ENCODE measurements at regions of chr19 and their contacts with region 1.

Region 1: DNA sequence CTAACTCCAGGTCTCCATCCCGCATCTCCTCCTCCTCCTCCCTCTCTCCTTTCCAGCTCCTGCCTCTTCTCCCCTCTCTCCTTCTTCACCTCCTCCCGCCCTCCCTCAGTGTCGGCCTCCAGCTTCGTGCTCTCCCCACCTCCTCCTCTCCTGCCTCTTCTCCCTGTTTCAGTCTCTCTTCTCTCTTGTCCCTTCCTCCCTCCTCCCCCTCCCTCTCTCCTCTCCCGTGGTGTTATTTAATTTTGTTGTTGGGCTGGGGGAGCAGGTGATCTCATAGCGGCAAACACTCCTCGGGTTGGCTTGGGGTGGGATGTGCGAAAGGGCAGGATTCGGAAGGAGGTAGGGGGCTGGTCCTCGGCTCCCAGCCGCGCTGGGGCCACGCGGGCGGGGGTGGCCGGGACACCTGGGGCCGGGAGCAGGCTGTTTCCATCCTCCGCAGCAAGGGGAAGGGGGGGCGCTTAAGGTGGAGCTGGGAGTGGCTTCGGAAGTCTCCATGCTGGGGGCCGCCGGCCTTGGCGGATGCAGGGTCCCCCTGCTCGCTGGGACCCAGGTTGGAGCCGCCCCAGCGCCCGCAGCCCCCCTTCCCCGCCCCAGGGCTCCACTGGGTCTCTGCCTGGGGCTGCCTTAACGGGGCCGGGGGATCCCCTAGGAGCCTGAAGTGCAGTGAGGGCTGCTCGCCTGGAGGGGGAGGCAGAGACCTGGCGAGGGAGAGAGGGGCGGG is at the start of gene CA11:
- DNase-seq: peak; percentile 73 to 83 (median 83)
- H3K4me3 ChIP-seq: peak within 1 kb of the TSS; percentile 33 to 75 (median 37)
- H3K4me3 Mint-ChIP-seq: peak within 1 kb of the TSS; percentile 76 to 94
- H3K27ac ChIP-seq: no peak within 1 kb of the TSS
- H3K27ac Mint-ChIP-seq: peak within 1 kb of the TSS; percentile 15 to 80 (median 66)
- H3K4me1 ChIP-seq: peaks cover 30 to 44% of the 10 kb centered on the region in 2 donors
- H3K4me1 Mint-ChIP-seq: peaks cover 44% of the 10 kb centered on the region
- H3K27me3 ChIP-seq: peaks cover 0 to 10% of the 10 kb centered on the region in 2 donors
- H3K27me3 Mint-ChIP-seq: peaks cover 11 to 28% (median 25%) of the 10 kb centered on the region in 3 donors
- CTCF ChIP-seq: peak; percentile 88
- polyA plus RNA-seq, gene CA11: 1.1 to 4.9 (median 1.8) TPM

Region 2: DNA sequence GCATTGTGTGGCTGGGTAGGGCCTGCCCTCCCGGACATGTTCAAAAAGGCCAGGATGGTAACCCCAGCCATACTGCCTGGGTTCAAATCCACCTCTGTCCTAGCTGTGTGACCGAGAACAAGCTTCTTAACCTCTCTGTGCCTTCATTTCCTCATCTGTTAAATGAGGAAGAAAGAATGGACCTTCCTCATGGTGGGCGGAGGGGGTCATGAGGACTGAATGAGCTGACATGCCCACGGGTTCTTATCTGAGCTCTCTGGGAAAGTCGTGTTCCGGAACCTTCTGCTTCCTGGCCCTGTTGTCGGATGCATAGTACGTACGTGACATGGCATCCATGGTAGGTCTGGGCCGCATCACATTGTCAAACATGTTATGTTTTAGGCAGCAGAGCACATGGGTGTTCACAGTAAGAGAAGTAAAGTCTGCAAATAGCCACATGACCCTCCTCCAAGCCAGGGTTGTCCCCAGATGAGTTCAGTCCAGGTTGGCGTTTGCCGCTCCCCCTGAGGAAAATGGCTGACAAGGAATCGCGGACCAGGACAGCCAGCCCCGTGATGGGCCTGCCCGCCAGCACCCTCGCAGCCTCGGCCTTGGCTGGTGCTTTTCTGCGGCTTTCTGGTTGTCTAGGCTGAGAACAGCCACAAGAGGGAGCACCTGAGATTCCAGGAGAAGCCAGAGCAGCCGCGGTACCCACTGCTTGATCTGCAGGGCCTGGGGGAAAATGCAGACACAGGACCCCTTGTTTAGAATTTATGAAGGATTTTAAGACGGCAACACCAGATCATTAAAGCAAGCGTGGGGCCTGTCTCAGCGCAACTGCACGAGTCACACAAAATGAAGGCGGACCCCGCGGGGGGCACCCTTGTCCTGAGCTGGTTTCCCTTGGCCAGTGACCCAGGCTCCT is 29.0 kb after region 1 on chr19:
- intact Hi-C with region 1: loop called (anchors 1 to 5 kb)
- DNase-seq: peak; percentile 69 to 76 (median 74)
- H3K4me3 ChIP-seq: no peak overlapping the region
- H3K4me3 Mint-ChIP-seq: peak overlapping the region in 1 of 2 donors; percentile 70
- H3K27ac ChIP-seq: no peak overlapping the region
- H3K27ac Mint-ChIP-seq: peak overlapping the region in 4 of 7 donors; percentile 14 to 72 (median 45)
- H3K4me1 ChIP-seq: peaks cover 0 to 7% of the 10 kb centered on the region in 2 donors
- H3K4me1 Mint-ChIP-seq: peaks cover 8% of the 10 kb centered on the region
- H3K27me3 ChIP-seq: no peaks in the 10 kb centered on the region
- H3K27me3 Mint-ChIP-seq: peaks cover 2 to 4% (median 3%) of the 10 kb centered on the region in 3 donors
- CTCF ChIP-seq: peak; percentile 80

Region 3: GRCh38 chr19:48713864-48714758 is 68.0 kb after region 1 on chr19:
- intact Hi-C with region 1: loop called in 1 of 2 experiments (anchors 10 kb)
- DNase-seq: peak; percentile 97 to 99 (median 98)
- H3K4me3 ChIP-seq: peak overlapping the region; percentile 42 to 86 (median 67)
- H3K4me3 Mint-ChIP-seq: peak overlapping the region; percentile 79 to 80
- H3K27ac ChIP-seq: peak overlapping the region; percentile 46 to 63
- H3K27ac Mint-ChIP-seq: peak overlapping the region; percentile 71 to 93 (median 86)
- H3K4me1 ChIP-seq: peaks cover 19 to 21% of the 10 kb centered on the region in 2 donors
- H3K4me1 Mint-ChIP-seq: peaks cover 14% of the 10 kb centered on the region
- H3K27me3 ChIP-seq: peaks cover 0 to 2% of the 10 kb centered on the region in 2 donors
- H3K27me3 Mint-ChIP-seq: peaks cover 6 to 11% (median 6%) of the 10 kb centered on the region in 3 donors
- CTCF ChIP-seq: no peak

Region 4: DNA sequence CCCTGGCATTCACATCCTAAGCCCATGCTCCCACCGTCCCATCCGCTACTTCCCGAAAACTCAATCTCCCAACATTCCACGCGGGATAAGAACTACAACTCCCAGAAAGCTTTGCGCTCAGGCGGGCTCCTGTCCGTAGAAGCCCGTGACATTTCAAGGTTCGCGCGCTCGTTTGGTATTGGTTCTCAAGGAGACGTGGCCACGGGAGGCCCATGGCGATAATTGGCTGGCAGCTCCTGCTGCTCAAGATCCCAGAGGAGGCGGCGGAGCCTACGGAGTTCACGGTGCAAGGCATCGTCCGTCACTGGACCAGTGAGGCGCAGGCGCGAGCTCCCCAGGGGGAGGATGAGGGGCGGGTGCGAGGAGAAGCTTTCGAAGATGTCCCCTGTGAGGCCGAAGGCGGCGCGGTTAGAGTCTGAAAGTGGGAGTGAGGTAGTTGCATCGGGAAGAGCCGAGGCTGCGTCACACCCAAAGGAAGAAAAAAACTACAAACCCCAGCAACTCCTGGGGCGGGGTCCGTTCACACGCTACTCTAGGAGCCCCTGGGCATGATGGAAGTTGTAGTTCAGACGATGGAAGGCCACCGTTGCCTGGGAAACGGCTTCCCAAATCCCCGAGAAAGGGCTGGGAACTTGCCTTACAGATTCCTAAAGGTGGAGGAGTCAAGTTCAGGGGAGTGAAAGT is 74.6 kb after region 1 on chr19:
- intact Hi-C with region 1: loop called (anchors 5 to 10 kb)
- DNase-seq: peak; percentile 88 to 93 (median 93)
- H3K4me3 ChIP-seq: peak overlapping the region; percentile 34 to 76 (median 72)
- H3K4me3 Mint-ChIP-seq: peak overlapping the region; percentile 93 to 96
- H3K27ac ChIP-seq: peak overlapping the region; percentile 82 to 85
- H3K27ac Mint-ChIP-seq: peak overlapping the region; percentile 93 to 97 (median 96)
- H3K4me1 ChIP-seq: peaks cover 16 to 27% of the 10 kb centered on the region in 2 donors
- H3K4me1 Mint-ChIP-seq: peaks cover 19% of the 10 kb centered on the region
- H3K27me3 ChIP-seq: no peaks in the 10 kb centered on the region
- H3K27me3 Mint-ChIP-seq: peaks cover 0 to 6% (median 0%) of the 10 kb centered on the region in 3 donors
- CTCF ChIP-seq: no peak

Region 5: DNA sequence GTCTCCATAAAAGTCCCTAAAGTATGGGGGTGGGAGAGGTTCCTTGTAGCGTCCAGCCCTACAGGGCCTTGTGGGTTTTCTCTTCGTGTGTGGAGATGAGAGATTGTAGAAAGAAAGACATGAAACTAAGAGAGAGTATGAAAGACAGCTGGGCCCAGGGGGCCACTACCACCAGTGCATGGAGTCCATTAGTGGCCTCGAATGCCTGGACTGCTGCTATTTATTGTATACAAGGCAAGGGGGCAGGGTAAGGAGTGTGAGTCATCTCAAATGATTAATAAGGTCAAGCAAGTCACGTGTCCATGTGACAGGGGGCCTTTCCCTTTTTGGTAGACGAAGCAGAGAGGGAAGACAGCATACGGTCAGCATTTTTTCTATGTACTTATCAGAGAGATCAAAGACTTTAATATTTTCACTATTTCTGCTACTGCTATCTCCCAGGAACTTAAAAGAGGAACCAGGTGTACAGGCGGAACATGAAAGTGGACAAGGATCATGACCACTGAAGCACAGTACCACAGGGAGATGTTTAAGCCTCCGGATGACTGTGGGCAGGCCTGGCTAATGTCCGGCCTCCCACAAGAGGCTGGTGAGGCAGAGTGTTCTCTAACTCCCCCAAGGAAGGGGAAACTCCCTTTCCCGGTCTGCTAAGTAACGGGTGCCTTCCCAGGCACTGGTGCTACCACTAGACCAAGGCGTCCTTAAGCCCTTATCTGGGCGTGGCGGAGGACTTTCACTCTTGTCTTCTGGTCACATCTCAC is 134.7 kb after region 1 on chr19:
- intact Hi-C with region 1: loop called in 1 of 2 experiments (anchors 5 kb)
- DNase-seq: peak; percentile 72 to 91 (median 81)
- H3K4me3 ChIP-seq: no peak overlapping the region
- H3K4me3 Mint-ChIP-seq: peak overlapping the region in 1 of 2 donors; percentile 3
- H3K27ac ChIP-seq: peak overlapping the region; percentile 52 to 69
- H3K27ac Mint-ChIP-seq: peak overlapping the region; percentile 68 to 93 (median 82)
- H3K4me1 ChIP-seq: peaks cover 17% of the 10 kb centered on the region in 2 donors
- H3K4me1 Mint-ChIP-seq: peaks cover 25% of the 10 kb centered on the region
- H3K27me3 ChIP-seq: no peaks in the 10 kb centered on the region
- H3K27me3 Mint-ChIP-seq: peaks cover 0 to 15% (median 7%) of the 10 kb centered on the region in 3 donors
- CTCF ChIP-seq: no peak

Region 6: DNA sequence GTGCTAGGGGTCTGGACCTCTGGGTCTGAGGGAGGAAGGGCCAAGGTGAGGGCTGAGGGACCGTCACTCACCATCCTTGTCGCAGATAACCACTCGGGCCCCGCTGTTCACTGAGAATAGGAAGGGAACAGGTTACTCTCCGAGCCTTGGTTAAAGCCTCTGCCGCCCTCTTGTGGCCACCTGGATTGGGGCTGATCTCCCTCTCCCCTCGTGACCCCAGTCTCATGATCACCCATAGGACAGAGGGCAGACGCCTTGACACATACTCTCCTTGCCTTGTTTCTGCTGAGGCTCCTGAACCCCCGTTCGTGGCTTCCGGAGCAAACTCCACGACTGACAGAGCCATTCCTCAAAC is 189.6 kb after region 1 on chr19:
- intact Hi-C with region 1: loop called (anchors 5 to 10 kb)
- DNase-seq: peak; percentile 90 to 93 (median 93)
- H3K4me3 ChIP-seq: peak overlapping the region in 1 of 3 experiments; percentile 65
- H3K4me3 Mint-ChIP-seq: peak overlapping the region; percentile 76 to 93
- H3K27ac ChIP-seq: no peak overlapping the region
- H3K27ac Mint-ChIP-seq: peak overlapping the region in 4 of 7 donors; percentile 74 to 87 (median 82)
- H3K4me1 ChIP-seq: peaks cover 20 to 22% of the 10 kb centered on the region in 2 donors
- H3K4me1 Mint-ChIP-seq: peaks cover 22% of the 10 kb centered on the region
- H3K27me3 ChIP-seq: peaks cover 0 to 20% of the 10 kb centered on the region in 2 donors
- H3K27me3 Mint-ChIP-seq: peaks cover 20 to 24% (median 23%) of the 10 kb centered on the region in 3 donors
- CTCF ChIP-seq: peak; percentile 79

Measured in CD14-positive monocyte (primary cell).